Posterior vena cava (tissue), 2 donors: ENCODE measurements at regions of chr21 and their contacts with region 1.

Region 1: GRCh38 chr21:35457097-35457804 is 408.1 kb upstream of the RUNX1 start:
- DNase-seq: no peak

Region 2: GRCh38 chr21:35503671-35504070 is 46.4 kb after region 1 on chr21:
- intact Hi-C with region 1: no loop called
- DNase-seq: no peak

Region 3: GRCh38 chr21:36028127-36029069 is 571.1 kb after region 1 on chr21:
- intact Hi-C with region 1: loop called in 1 of 2 experiments (anchors 10 kb)
- DNase-seq: peak; percentile 92